ENCODE measurements at regions of chr4 and their contacts with region 1.

Region 1: GRCh38 chr4:122577808-122578781 is 42.8 kb downstream of the IL21 start:
- DNase-seq: peak; percentile 47
- H3K4me3 ChIP-seq: no peak overlapping the region
- H3K27ac ChIP-seq: no peak overlapping the region
- H3K4me1 ChIP-seq: no peaks in the 10 kb centered on the region
- H3K27me3 ChIP-seq: no peaks in the 10 kb centered on the region
- CTCF ChIP-seq: peak; percentile 68

Region 2: DNA sequence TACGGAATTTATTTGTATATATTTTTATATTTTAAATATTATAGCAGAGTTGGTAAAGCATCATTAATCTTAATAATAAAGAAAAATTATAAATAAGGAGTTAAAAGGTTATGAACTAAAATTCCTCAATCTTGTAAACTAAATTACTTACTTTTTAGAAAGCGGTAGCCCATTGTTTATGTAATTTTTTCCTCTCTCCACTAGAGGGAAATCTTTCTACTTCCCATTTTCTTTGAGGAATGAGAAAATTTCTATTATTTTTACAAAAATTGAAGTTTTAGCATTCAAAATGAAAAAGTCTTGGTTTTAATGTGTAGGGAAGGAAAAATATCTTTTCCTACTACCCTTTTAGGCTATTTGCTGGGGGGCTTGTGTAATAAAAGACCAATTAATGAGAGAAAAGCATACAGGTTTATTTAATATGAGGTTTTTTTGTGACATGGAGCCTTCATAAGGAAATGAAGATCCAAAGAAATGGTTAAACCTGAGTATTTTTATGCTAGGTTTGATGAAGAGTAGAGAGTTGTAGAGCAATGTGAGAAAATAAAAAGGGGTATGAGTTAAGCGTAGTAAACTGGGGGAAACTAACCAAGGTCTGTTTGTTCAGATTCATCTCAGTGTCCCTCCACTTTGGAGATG is 268.0 kb before region 1 on chr4:
- intact Hi-C with region 1: loop called (anchors 10 kb)
- DNase-seq: no peak
- H3K4me3 ChIP-seq: no peak overlapping the region
- H3K27ac ChIP-seq: no peak overlapping the region
- H3K4me1 ChIP-seq: no peaks in the 10 kb centered on the region
- H3K27me3 ChIP-seq: no peaks in the 10 kb centered on the region
- CTCF ChIP-seq: peak; percentile 26

Region 3: GRCh38 chr4:122744229-122744628 is 166.1 kb after region 1 on chr4:
- intact Hi-C with region 1: no loop called
- DNase-seq: no peak
- H3K4me3 ChIP-seq: no peak overlapping the region
- H3K27ac ChIP-seq: no peak overlapping the region
- H3K4me1 ChIP-seq: no peaks in the 10 kb centered on the region
- H3K27me3 ChIP-seq: no peaks in the 10 kb centered on the region
- CTCF ChIP-seq: no peak

Region 4: GRCh38 chr4:122814426-122814825 is 236.3 kb after region 1 on chr4:
- intact Hi-C with region 1: no loop called
- DNase-seq: no peak
- H3K4me3 ChIP-seq: no peak overlapping the region
- H3K27ac ChIP-seq: no peak overlapping the region
- H3K4me1 ChIP-seq: no peaks in the 10 kb centered on the region
- H3K27me3 ChIP-seq: no peaks in the 10 kb centered on the region
- CTCF ChIP-seq: no peak

Measured in colonic mucosa (tissue), 4 donors.